ENCODE measurements at regions of chr2 and their contacts with region 1.

Region 1: DNA sequence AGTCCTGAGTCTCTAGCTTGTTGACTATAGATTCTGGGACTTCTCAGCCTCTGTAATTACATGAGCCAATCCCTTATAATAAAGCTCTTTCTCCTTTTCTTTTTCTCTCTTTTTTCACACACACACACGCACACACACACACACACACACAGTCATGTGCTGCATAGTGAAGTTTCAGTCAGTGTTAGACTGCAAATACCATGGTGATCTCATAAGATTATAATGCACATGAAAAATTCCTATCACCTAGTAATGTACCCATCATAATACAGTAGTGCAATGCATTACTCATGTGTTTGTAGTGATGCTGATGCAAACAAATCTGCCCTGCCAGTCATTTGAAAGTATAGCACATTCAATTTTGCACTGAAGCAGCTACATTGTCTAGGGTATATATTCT is 558.2 kb downstream of the SUCLG1 start:
- DNase-seq: peak; percentile 2
- ATAC-seq: no peak
- H3K4me3 ChIP-seq: no peak overlapping the region
- H3K27ac ChIP-seq: no peak overlapping the region
- H3K4me1 ChIP-seq: no peaks in the 10 kb centered on the region
- H3K27me3 ChIP-seq: no peaks in the 10 kb centered on the region
- CTCF ChIP-seq: no peak
- POLR2A ChIP-seq: no peak
- RAD21 ChIP-seq: no peak

Region 2: DNA sequence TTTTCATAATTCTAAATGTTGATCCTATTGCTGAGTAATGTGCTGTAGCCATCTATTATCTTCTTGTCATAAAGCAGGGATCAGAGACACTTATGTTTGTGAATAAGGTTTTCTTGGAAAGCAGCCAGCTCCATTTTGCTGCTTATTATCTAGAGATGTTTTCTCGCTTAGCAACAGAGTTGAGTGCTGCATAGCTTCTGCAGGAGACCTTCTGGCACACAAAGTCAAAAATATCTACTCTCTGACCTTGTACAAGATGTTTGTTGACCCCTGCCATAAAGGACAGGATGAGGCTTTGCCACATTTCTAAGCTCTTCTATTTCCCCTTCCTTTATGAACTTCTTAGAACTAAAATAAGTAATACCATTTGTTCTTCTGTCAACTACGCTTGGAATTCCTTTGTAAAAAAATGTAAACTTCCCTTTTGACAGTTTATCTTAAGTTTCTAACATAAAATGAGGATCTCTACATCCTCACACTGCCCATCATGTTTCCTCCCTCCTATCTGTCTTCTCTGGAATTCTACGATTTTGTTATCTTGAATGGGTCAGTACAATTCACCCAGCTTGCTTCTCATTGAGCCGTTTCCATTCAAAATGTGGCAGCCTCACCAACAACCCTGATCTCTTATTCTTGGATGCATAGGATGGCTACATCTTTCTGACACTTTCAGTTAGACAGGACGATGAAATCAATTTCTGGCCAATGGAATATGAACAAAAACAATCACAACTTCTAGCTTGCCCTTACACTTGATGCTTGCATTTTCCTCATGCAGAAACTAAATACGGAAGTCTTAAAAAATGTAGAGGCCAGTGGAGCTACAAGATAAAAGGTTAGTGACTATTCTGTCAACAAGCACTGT is 818.8 kb before region 1 on chr2:
- CTCF ChIA-PET with region 1: no interaction called
- POLR2A ChIA-PET with region 1: no interaction called
- dilution Hi-C with region 1: no loop called
- in situ Hi-C with region 1: no loop called
- intact Hi-C with region 1: loop called (anchors 5 kb)
- DNase-seq: peak; percentile 65
- ATAC-seq: peak; percentile 75
- H3K4me3 ChIP-seq: no peak overlapping the region
- H3K27ac ChIP-seq: no peak overlapping the region
- H3K4me1 ChIP-seq: no peaks in the 10 kb centered on the region; the same call in 1 of the 2 replicates
- H3K27me3 ChIP-seq: no peaks in the 10 kb centered on the region
- CTCF ChIP-seq: no peak
- POLR2A ChIP-seq: no peak
- RAD21 ChIP-seq: no peak

Region 3: DNA sequence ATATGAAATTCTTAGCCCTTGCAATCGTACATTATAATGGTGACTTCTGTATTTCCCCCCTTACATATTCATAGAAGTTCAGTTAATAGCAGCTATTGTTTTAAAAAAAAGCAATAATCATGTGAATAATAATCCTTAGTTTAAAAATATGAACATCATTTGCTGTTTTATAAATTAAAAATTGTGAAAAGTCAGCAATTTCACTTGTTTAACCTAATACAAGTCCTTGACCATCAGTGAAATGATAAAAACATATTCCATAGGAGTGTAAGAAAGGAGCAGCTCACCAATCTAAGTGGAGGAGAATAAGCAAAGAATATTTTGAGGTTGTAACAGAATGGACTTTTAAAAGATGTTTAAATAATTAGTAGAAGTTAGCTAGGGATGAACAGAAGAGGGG is 92.0 kb before region 1 on chr2:
- CTCF ChIA-PET with region 1: no interaction called
- POLR2A ChIA-PET with region 1: no interaction called
- dilution Hi-C with region 1: no loop called
- in situ Hi-C with region 1: no loop called
- intact Hi-C with region 1: no loop called
- DNase-seq: no peak
- ATAC-seq: no peak
- H3K4me3 ChIP-seq: no peak overlapping the region
- H3K27ac ChIP-seq: no peak overlapping the region
- H3K4me1 ChIP-seq: no peaks in the 10 kb centered on the region
- H3K27me3 ChIP-seq: no peaks in the 10 kb centered on the region
- CTCF ChIP-seq: no peak
- POLR2A ChIP-seq: no peak
- RAD21 ChIP-seq: no peak